Endothelial cell of umbilical vein (primary cell): ENCODE measurements at regions of chr3 and their contacts with region 1.

Region 1: GRCh38 chr3:172039436-172040077 is at the start of gene FNDC3B:
- DNase-seq: peak; percentile 97
- H3K4me3 ChIP-seq: peak within 1 kb of the TSS; percentile 86 to 100 (median 94)
- H3K27ac ChIP-seq: peak within 1 kb of the TSS; percentile 96
- H3K4me1 ChIP-seq: peaks cover 34% of the 10 kb centered on the region
- H3K27me3 ChIP-seq: no peaks in the 10 kb centered on the region
- CTCF ChIP-seq: no peak
- POLR2A ChIP-seq: peak; percentile 75
- total RNA-seq, gene FNDC3B: 295 and 302 TPM in 2 replicates

Region 2: DNA sequence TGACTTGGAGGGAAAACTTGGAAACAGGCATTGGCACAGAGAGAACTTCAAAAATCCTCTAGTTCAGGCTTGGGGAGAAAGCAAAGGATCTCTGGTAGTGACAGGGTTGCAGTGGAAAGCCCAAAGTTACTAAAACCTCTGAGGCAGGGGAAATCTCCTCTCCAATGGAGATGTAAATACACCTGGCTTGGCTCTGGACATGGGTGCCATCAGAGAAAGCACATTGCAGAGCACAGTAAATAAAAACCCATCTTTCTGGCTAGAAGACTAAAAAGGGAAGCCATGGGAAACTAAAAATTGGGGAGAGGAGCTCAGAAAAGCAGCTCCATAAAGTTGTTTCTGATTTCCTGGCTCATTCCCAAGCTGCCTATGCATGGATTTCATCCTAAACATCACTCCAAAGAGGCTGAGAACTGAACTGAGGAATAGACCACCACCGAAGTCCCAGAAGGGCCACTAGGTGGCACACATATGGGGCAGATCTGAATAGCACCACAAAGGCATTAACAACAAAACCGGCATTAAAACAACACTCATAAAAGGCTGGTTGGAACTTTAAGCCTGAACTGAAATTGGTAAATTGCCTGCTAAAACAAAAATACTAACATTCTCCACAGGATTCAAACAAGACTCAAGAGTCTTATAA is 335.7 kb before region 1 on chr3:
- CTCF ChIA-PET with region 1: no interaction called
- POLR2A ChIA-PET with region 1: no interaction called
- dilution Hi-C with region 1: no loop called
- intact Hi-C with region 1: loop called (anchors 5 kb)
- DNase-seq: peak; percentile 45
- H3K4me3 ChIP-seq: no peak overlapping the region
- H3K27ac ChIP-seq: no peak overlapping the region
- H3K4me1 ChIP-seq: no peaks in the 10 kb centered on the region
- H3K27me3 ChIP-seq: no peaks in the 10 kb centered on the region
- CTCF ChIP-seq: peak; percentile 59 to 69
- POLR2A ChIP-seq: no peak

Region 3: DNA sequence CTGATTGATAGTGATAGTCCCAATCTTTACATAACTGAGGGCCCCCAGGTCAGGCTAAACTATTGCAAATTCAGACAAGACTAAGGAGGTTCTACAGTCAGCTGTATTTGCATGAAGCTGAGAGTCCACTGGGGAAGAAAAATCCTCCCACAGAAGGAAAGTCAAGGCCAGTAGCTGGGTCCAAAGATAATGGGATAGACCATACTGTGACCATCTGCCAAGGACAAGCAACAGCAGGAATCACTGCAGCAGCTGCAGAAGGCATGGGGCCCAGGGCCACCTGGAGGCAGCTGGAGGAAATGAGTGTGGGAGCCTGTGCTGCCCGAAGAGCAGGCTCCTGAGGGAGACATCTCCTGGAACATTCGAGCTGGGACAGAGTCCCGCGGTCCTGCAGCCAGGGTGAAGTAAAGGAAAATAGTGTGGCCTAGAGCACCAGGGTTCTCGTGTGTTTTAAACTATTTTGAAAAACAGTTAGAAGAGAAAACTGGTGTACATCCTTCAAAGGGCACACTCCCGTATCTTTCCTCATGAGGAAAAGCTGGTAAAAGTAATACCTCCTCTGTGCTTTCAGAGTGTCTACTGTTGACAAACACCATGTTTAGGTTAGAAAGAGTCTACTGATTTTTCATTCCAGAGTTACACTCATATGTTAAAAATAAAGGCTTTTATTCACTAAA is 209.6 kb before region 1 on chr3:
- CTCF ChIA-PET with region 1: interaction called, 13 read pairs
- POLR2A ChIA-PET with region 1: interaction called, 6 read pairs
- dilution Hi-C with region 1: no loop called
- intact Hi-C with region 1: no loop called
- DNase-seq: peak; percentile 96
- H3K4me3 ChIP-seq: no peak overlapping the region
- H3K27ac ChIP-seq: peak overlapping the region; percentile 74
- H3K4me1 ChIP-seq: peaks cover 51% of the 10 kb centered on the region
- H3K27me3 ChIP-seq: no peaks in the 10 kb centered on the region
- CTCF ChIP-seq: peak; percentile 74 to 81
- POLR2A ChIP-seq: no peak

Region 4: DNA sequence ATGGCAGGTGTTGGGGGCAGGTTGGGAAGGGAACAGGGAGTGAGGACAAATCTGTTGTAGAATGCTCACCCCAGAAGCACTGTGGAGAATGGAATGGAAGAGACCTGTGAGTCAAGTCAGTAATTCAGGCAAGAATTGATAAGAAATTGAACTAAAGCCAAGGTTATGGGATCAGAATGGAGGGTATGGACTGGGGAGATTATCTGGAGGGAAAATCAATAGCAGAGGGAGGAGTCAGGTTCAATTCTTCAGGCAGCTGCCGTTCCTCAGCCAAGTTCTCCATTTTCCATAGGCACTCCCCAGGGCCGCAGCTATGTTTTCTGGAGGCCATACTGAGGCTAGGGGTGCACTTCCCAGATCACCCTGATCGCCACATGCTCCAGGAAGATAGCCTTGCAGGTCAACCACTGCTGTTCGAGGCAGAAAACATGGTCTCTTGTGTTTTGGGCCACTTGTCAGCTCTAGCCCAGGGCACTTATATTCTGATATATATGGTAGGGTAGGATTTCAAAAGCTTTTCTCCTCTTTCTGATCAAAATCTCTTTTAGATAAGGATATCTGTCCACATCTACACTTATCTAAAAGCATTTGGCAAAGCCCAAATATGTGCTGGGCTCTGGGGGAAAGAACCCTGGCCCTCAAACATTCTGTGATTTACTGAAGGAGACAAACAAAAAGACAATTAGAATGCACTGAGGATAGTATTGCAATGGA is 104.1 kb before region 1 on chr3:
- CTCF ChIA-PET with region 1: interaction called, 7 read pairs
- POLR2A ChIA-PET with region 1: interaction called, 6 read pairs
- dilution Hi-C with region 1: no loop called
- intact Hi-C with region 1: loop called (anchors 1 kb)
- DNase-seq: no peak
- H3K4me3 ChIP-seq: no peak overlapping the region
- H3K27ac ChIP-seq: no peak overlapping the region
- H3K4me1 ChIP-seq: no peaks in the 10 kb centered on the region
- H3K27me3 ChIP-seq: no peaks in the 10 kb centered on the region
- CTCF ChIP-seq: no peak
- POLR2A ChIP-seq: no peak

Region 5: GRCh38 chr3:172138795-172139441 is 99.4 kb after region 1 on chr3:
- CTCF ChIA-PET with region 1: interaction called, 4 read pairs
- POLR2A ChIA-PET with region 1: interaction called, 3 read pairs
- dilution Hi-C with region 1: no loop called
- intact Hi-C with region 1: loop called (anchors 1 kb)
- DNase-seq: peak; percentile 78
- H3K4me3 ChIP-seq: no peak overlapping the region
- H3K27ac ChIP-seq: peak overlapping the region; percentile 99
- H3K4me1 ChIP-seq: peaks cover 90% of the 10 kb centered on the region
- H3K27me3 ChIP-seq: no peaks in the 10 kb centered on the region
- CTCF ChIP-seq: no peak
- POLR2A ChIP-seq: peak; percentile 41